Heart right ventricle (tissue), 16 donors: ENCODE measurements at regions of chr6 and their contacts with region 1.

Region 1: DNA sequence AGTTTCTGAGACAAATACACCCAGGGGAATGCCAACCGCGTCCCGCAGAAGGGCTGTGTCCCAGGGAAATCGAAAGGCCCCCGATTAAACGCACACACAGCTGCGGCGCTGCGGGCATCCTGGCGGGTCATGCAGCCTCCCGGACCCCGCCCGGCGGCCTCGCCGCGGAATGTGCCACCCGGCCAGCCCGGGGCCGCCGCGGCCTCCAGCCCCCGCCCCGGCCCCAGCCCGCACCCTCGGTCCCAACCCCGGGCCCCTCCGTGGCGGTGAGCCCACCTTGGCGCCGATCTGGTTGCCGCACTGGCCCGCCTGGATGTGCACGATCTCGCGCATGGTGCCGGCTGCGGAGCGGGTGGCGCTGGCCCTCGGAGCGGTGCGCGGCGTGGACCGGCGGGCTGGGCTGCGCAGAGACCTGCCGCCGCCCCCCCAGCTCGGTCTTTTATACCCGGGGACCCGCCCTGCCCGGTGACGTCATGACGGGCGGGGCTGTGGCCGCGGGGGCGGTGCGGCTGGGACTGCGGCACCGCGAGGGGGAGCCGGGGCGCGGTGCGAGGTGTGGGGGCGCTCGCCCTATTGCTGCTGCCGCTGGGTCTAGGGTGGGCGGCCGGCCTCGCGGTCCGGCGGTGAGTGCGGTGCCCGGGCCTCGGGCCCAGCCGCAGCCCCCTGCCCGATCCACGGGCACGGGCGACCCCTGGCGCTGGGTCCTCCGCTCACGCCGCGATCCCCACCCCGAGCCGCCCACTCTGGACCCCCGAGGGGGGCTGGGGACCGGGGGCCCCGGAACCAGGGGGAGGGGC is at the start of gene TUBB2A:
- DNase-seq: peak; percentile 84 to 90
- ATAC-seq: peak; percentile 87 to 95 (median 92)
- H3K4me3 ChIP-seq: peak within 1 kb of the TSS; percentile 81 to 98 (median 88)
- H3K27ac ChIP-seq: peak within 1 kb of the TSS; percentile 93 to 100 (median 99)
- H3K4me1 ChIP-seq: peaks cover 0 to 35% (median 0%) of the 10 kb centered on the region in 9 donors
- H3K27me3 ChIP-seq: no peaks in the 10 kb centered on the region
- CTCF ChIP-seq: peak in 8 of 9 donors; percentile 34 to 83 (median 67)
- total RNA-seq, gene TUBB2A: 7.0 to 49.6 (median 17.5) TPM

Region 2: DNA sequence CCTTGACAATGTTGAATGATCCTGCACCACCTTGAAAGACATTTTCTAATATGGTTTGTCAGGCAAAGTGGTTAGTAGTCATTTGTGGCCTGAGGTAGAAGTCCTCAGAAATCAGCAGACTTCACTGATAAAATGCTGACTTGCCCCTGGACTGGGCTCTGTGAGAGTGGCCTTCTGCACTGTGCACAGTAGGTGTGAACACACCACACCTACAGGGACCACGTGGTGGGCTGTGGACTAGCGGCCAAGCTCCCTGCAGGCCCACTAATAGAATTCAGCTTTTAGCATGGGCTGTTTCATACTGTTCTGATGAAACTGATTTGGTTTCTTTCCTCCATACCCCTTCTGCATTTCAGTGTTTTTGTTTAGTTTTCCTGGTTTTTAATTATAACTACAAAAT is 31.5 kb before region 1 on chr6:
- intact Hi-C with region 1: loop called in 2 of 10 experiments (anchors 2 to 5 kb)
- DNase-seq: no peak
- ATAC-seq: no peak
- H3K4me3 ChIP-seq: no peak overlapping the region
- H3K27ac ChIP-seq: peak overlapping the region in 1 of 10 donors; percentile 51
- H3K4me1 ChIP-seq: peaks cover 0 to 12% (median 0%) of the 10 kb centered on the region in 9 donors
- H3K27me3 ChIP-seq: no peaks in the 10 kb centered on the region
- CTCF ChIP-seq: no peak

Region 3: GRCh38 chr6:3251462-3252314 is 94.4 kb after region 1 on chr6:
- intact Hi-C with region 1: loop called in 5 of 10 experiments (anchors 2 to 10 kb)
- DNase-seq: peak; percentile 85
- ATAC-seq: peak; percentile 73 to 90 (median 83)
- H3K4me3 ChIP-seq: peak overlapping the region in 2 of 10 donors; percentile 16 to 27
- H3K27ac ChIP-seq: no peak overlapping the region
- H3K4me1 ChIP-seq: peaks cover 0 to 40% (median 15%) of the 10 kb centered on the region in 9 donors
- H3K27me3 ChIP-seq: peaks cover 0 to 39% (median 13%) of the 10 kb centered on the region in 7 donors
- CTCF ChIP-seq: peak; percentile 88 to 98 (median 97)

Region 4: DNA sequence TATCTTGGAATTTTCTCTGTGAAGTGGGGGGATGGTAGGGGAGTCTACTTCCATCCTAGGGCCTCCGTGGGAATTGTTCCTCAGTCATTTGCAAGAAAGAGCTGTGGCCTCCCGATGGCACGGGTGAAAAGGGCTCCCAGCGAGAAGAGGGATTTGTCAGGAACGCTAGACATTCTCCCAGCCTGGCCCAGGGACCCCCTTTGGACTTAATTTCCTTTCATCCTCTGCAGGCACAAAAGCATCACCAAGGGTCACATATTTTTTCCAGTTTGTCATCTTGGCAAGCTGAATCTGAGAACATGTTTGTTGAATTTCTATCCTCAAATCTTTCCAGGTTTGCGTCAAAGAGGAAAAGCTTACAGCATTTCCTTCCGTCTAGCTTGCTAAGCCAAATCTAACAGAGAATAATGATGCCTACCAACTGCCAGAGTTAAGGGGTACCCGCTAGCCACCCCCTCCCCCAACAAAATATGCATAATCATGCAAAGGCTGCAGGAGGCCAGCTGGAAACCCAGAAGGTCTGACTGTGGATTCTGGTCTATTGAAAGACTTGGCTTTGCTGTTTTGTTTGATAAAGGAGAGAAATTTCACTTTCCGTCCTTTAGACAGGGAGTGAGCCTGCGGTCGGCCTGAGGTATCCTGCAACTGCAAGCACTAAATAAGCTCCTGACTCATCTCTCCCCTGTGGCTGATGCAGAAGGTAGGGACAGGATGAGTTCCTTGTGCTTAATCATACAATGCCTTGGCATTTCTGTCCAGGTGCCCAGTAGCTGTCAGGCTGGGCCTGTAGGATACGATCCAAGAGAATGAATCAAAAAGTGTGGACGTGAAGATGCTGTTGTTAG is 124.5 kb after region 1 on chr6:
- intact Hi-C with region 1: no loop called
- DNase-seq: peak in 1 of 2 donors; percentile 29
- ATAC-seq: peak in 6 of 8 donors; percentile 17 to 50 (median 38)
- H3K4me3 ChIP-seq: no peak overlapping the region
- H3K27ac ChIP-seq: peak overlapping the region in 8 of 10 donors; percentile 6 to 68 (median 45)
- H3K4me1 ChIP-seq: peaks cover 7 to 31% (median 21%) of the 10 kb centered on the region in 9 donors
- H3K27me3 ChIP-seq: no peaks in the 10 kb centered on the region
- CTCF ChIP-seq: no peak

Region 5: DNA sequence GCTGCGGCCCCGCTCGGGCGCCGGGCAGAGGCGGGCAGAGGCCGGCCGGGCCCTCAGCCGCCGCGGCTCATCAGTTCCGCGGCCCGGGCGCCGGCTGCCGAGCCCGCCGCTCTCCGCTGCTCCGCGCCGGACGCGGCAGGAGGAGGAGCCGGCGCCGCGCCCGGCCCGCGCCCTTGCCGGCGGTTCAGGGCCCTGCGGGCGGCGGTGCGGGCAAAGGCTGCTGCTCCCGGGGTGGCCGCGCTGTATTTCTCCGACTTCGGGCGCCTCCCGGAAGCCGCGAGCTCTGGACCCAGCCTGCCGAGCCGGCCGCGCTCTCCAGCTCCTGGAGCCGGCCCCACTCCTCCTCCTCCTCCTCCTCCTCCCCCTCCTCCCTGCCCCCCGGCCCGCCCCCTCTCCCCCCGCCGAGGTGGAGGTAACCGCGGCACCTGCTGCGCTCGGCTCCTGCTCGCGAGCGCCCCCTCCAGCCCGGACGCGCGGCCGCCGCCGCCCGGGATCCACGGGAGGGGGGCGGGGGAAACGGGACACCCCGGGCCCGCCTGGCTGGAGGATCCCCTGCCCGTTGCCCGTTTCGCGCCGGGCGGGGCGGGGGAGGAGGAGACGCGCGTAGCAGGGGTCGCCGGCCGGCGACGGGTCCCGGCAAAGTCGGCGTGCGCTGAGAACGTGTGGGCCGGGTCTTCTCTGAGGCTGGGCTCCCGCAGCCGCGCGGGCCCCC is 299.6 kb after region 1 on chr6 and contains the start of gene SLC22A23:
- intact Hi-C with region 1: no loop called
- DNase-seq: peak; percentile 53 to 76
- ATAC-seq: peak; percentile 77 to 90 (median 80)
- H3K4me3 ChIP-seq: peak within 1 kb of the TSS; percentile 23 to 72 (median 68)
- H3K27ac ChIP-seq: peak within 1 kb of the TSS; percentile 25 to 67 (median 49)
- H3K4me1 ChIP-seq: peaks cover 11 to 43% (median 25%) of the 10 kb centered on the region in 9 donors
- H3K27me3 ChIP-seq: peaks cover 0 to 87% (median 14%) of the 10 kb centered on the region in 7 donors
- CTCF ChIP-seq: peak; percentile 62 to 81 (median 77)
- total RNA-seq, gene SLC22A23: 4.4 to 7.8 (median 5.5) TPM